Activated naive CD4-positive, alpha-beta T cell treated with anti-CD3 and anti-CD28 coated beads for 36 hours (primary cell): ENCODE measurements at regions of chr22 and their contacts with region 1.

Region 1: GRCh38 chr22:30089655-30089974 is 9.4 kb downstream of the HORMAD2 start:
- DNase-seq: no peak
- H3K4me3 Mint-ChIP-seq: no peak overlapping the region
- H3K27ac Mint-ChIP-seq: no peak overlapping the region
- H3K4me1 Mint-ChIP-seq: peaks cover 10% of the 10 kb centered on the region
- H3K27me3 Mint-ChIP-seq: peaks cover 4% of the 10 kb centered on the region

Region 2: GRCh38 chr22:29394931-29395581 is 694.6 kb before region 1 on chr22:
- CTCF ChIA-PET with region 1: no interaction called
- intact Hi-C with region 1: loop called (anchors 1 kb)
- DNase-seq: peak; percentile 81
- H3K4me3 Mint-ChIP-seq: no peak overlapping the region
- H3K27ac Mint-ChIP-seq: no peak overlapping the region
- H3K4me1 Mint-ChIP-seq: peaks cover 6% of the 10 kb centered on the region
- H3K27me3 Mint-ChIP-seq: no peaks in the 10 kb centered on the region

Region 3: DNA sequence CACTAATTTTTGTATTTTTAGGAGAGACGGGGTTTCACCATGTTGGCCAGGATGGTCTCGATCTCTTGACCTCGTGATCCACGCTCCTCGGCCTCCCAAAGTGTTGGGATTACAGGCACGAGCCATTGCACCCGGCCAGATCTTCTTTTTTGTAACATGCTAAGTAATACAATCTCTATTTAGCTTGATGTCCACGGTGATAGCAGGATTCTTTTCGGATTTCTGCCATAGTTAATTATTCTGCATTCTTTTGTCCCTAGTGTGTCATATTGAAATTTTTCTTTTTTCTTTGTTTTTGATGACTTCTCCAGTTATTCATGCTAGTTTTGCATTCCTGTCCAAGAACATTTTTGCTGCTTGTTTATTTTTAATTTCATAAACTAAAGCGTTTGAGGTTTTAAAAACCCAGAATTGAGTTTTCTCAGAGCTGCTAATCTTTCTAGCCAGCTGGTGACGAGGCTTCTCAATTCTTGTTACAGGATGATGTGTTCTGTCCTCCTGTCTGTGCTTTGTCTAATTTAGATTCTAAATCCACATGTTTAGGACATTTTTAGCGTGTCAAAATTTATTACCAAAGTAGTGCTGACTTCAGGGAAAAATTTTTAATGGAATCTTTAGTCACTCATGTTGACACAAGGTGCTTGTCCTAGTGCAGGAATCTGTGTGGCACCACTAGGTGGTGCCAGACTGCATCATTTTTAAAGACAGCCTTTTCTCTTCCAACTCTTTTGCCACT is 464.4 kb before region 1 on chr22:
- CTCF ChIA-PET with region 1: interaction called, 13 read pairs
- intact Hi-C with region 1: no loop called
- DNase-seq: peak; percentile 59
- H3K4me3 Mint-ChIP-seq: no peak overlapping the region
- H3K27ac Mint-ChIP-seq: no peak overlapping the region
- H3K4me1 Mint-ChIP-seq: peaks cover 70% of the 10 kb centered on the region
- H3K27me3 Mint-ChIP-seq: no peaks in the 10 kb centered on the region

Region 4: DNA sequence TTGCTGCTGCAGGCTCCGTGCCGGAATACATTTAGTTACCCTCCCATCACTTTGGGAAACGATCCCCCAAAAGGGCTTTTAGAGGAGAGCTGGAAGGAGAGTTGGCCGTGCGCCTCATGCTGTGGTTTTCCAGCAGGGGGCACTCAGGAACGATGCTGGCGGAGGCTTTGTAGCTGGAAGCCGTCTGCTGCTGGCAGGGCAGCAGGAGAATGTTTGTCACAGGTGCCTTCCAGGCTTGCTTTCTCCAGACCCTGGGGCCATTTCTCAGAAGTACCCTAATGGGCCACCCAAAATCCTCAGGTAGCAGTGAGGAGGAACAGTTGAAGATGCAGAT is 399.8 kb before region 1 on chr22:
- CTCF ChIA-PET with region 1: interaction called, 3 read pairs
- intact Hi-C with region 1: loop called (anchors 1 kb)
- DNase-seq: peak; percentile 70
- H3K4me3 Mint-ChIP-seq: no peak overlapping the region
- H3K27ac Mint-ChIP-seq: no peak overlapping the region
- H3K4me1 Mint-ChIP-seq: peaks cover 1% of the 10 kb centered on the region
- H3K27me3 Mint-ChIP-seq: no peaks in the 10 kb centered on the region

Region 5: GRCh38 chr22:29766632-29767170 is 322.9 kb before region 1 on chr22 and contains the start of gene ZMAT5:
- CTCF ChIA-PET with region 1: no interaction called
- intact Hi-C with region 1: loop called (anchors 5 kb)
- DNase-seq: peak; percentile 97
- H3K4me3 Mint-ChIP-seq: peak within 1 kb of the TSS; percentile 96
- H3K27ac Mint-ChIP-seq: peak within 1 kb of the TSS; percentile 91
- H3K4me1 Mint-ChIP-seq: peaks cover 33% of the 10 kb centered on the region
- H3K27me3 Mint-ChIP-seq: no peaks in the 10 kb centered on the region
- total RNA-seq, gene ZMAT5: 14.3 to 15.3 TPM